Left lung (tissue), 14 donors: ENCODE measurements at regions of chr7 and their contacts with region 1.

Region 1: GRCh38 chr7:48628793-48629349 is 295.5 kb upstream of the CDC14C start:
- DNase-seq: no peak
- ATAC-seq: no peak
- H3K4me3 ChIP-seq: no peak overlapping the region
- H3K27ac ChIP-seq: no peak overlapping the region
- H3K4me1 ChIP-seq: no peaks in the 10 kb centered on the region
- H3K27me3 ChIP-seq: no peaks in the 10 kb centered on the region
- CTCF ChIP-seq: no peak

Region 2: GRCh38 chr7:49060743-49061142 is 431.9 kb after region 1 on chr7:
- intact Hi-C with region 1: loop called in 1 of 2 experiments (anchors 10 kb)
- DNase-seq: no peak
- ATAC-seq: no peak
- H3K4me3 ChIP-seq: no peak overlapping the region
- H3K27ac ChIP-seq: no peak overlapping the region
- H3K4me1 ChIP-seq: no peaks in the 10 kb centered on the region
- H3K27me3 ChIP-seq: no peaks in the 10 kb centered on the region
- CTCF ChIP-seq: no peak